ENCODE measurements at regions of chr6 and their contacts with region 1.

Region 1: GRCh38 chr6:121951918-121952379 is 447.5 kb upstream of the HSF2 start:
- DNase-seq: peak; percentile 82 to 89
- ATAC-seq: peak; percentile 90
- H3K4me3 ChIP-seq: no peak overlapping the region
- H3K27ac ChIP-seq: peak overlapping the region; percentile 73 to 97
- H3K4me1 ChIP-seq: peaks cover 2 to 4% of the 10 kb centered on the region in 2 donors
- H3K27me3 ChIP-seq: no peaks in the 10 kb centered on the region

Region 2: DNA sequence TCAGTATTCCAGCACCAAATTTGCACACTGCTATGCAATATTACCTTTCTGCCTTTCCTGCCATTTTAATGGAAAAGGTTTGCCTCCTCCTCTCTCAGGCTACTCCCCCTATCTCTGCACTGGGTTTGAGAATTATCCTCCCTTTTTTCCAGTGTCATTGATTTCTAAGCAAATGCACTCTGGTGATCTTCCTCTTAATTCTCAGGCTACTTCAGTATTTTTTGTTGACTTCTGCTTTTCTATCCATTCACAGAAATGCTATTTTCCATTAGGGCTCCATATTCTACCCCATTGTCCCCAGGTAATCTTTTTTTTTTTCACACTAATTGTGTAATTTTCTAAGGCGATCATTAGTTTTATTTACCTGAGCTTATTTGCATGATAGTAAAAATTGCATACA is 372.5 kb before region 1 on chr6:
- intact Hi-C with region 1: no loop called
- DNase-seq: no peak
- ATAC-seq: no peak
- H3K4me3 ChIP-seq: no peak overlapping the region
- H3K27ac ChIP-seq: no peak overlapping the region
- H3K4me1 ChIP-seq: peaks cover 0 to 5% of the 10 kb centered on the region in 2 donors
- H3K27me3 ChIP-seq: no peaks in the 10 kb centered on the region

Region 3: GRCh38 chr6:121780325-121781313 is 171.3 kb before region 1 on chr6:
- intact Hi-C with region 1: loop called (anchors 5 to 10 kb)
- DNase-seq: peak; percentile 90 to 91
- ATAC-seq: peak; percentile 86
- H3K4me3 ChIP-seq: no peak overlapping the region
- H3K27ac ChIP-seq: peak overlapping the region; percentile 20 to 94
- H3K4me1 ChIP-seq: peaks cover 3 to 5% of the 10 kb centered on the region in 2 donors
- H3K27me3 ChIP-seq: no peaks in the 10 kb centered on the region

Region 4: DNA sequence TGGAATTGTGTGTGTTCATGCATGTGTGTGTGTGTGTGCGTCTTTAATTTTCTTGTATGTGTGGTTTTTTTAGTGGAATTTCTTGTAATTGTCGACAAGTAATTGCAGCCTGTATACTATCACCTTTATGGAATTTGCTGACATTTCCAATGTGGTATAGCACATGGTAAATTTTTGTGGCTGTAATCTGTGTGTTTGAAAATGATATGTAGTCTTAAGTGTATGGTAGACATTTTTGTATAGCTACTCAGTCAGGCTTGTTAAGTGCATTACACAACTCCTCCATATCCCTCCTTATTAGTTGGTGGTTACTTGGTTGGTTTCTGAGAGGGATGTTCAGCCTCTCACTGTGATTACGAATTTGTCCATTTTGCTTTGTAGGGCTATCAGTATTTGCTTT is 63.0 kb after region 1 on chr6:
- intact Hi-C with region 1: loop called in 1 of 2 experiments (anchors 5 kb)
- DNase-seq: no peak
- ATAC-seq: no peak
- H3K4me3 ChIP-seq: no peak overlapping the region
- H3K27ac ChIP-seq: no peak overlapping the region
- H3K4me1 ChIP-seq: no peaks in the 10 kb centered on the region
- H3K27me3 ChIP-seq: no peaks in the 10 kb centered on the region